Transverse colon (tissue), 4 donors: ENCODE measurements at regions of chr9 and their contacts with region 1.

Region 1: GRCh38 chr9:92790542-92791527 is 26.2 kb upstream of the BICD2 start:
- DNase-seq: peak; percentile 85
- H3K4me3 ChIP-seq: no peak overlapping the region
- H3K27ac ChIP-seq: no peak overlapping the region
- H3K4me1 ChIP-seq: no peaks in the 10 kb centered on the region
- H3K27me3 ChIP-seq: peaks cover 14% of the 10 kb centered on the region
- CTCF ChIP-seq: peak; percentile 80 to 91 (median 86)
- EP300 ChIP-seq: no peak
- POLR2A ChIP-seq: no peak

Region 2: GRCh38 chr9:92325269-92325990 is 465.4 kb before region 1 on chr9 and contains the starts of genes CENPP and NOL8:
- in situ Hi-C with region 1: loop called in 1 of 4 experiments (anchors 25 kb)
- intact Hi-C with region 1: no loop called
- DNase-seq: peak; percentile 86
- H3K4me3 ChIP-seq: peak within 1 kb of the TSS; percentile 58 to 91 (median 73)
- H3K27ac ChIP-seq: peak within 1 kb of the TSS; percentile 90 to 95 (median 92)
- H3K4me1 ChIP-seq: peaks cover 11 to 26% (median 16%) of the 10 kb centered on the region in 4 donors
- H3K27me3 ChIP-seq: no peaks in the 10 kb centered on the region
- CTCF ChIP-seq: peak in 1 of 5 experiments; percentile 6
- EP300 ChIP-seq: no peak
- POLR2A ChIP-seq: peak; percentile 35
- total RNA-seq, gene CENPP: 0.37 to 7.1 (median 3.2) TPM
- total RNA-seq, gene NOL8: 17.6 to 86.2 (median 24.3) TPM

Region 3: DNA sequence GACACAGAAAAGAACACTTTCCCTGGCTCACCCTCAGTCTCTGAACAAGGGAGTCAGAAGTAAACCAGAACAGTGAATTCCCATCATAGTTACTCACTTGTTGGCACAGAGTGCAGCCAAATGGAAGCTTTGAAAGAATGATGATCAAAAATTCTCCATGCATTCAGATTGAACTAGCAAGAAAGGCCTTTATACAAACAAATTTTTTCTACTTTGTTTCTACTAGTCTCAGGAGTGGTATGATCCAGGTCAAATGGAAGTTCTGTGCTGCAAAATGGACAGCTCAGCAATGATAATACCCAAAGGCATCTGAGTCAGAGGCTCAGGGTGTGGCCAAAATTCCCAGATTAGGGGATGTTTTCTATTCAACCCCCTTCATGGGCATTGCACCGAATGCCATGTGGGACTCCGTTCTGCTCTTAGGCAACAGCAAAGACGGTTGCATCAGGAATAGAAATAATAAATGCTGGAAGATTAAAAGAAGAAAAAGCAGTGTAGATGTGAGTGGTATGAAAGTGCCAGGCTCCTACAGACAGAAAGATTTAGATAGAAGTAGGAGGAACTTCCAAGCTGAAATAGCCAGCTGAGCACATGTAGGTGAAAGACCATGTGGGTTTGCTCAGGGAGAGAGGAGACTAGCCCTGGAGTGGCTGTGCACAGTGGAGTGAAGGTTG is 284.5 kb before region 1 on chr9:
- in situ Hi-C with region 1: no loop called
- intact Hi-C with region 1: no loop called
- DNase-seq: no peak
- H3K4me3 ChIP-seq: no peak overlapping the region
- H3K27ac ChIP-seq: peak overlapping the region; percentile 62 to 83 (median 70)
- H3K4me1 ChIP-seq: peaks cover 11 to 37% (median 19%) of the 10 kb centered on the region in 4 donors
- H3K27me3 ChIP-seq: no peaks in the 10 kb centered on the region
- CTCF ChIP-seq: no peak
- EP300 ChIP-seq: no peak
- POLR2A ChIP-seq: no peak

Region 4: GRCh38 chr9:92650839-92651621 is 139.8 kb before region 1 on chr9:
- in situ Hi-C with region 1: no loop called
- intact Hi-C with region 1: no loop called
- DNase-seq: peak; percentile 25
- H3K4me3 ChIP-seq: no peak overlapping the region
- H3K27ac ChIP-seq: peak overlapping the region; percentile 29 to 80 (median 58)
- H3K4me1 ChIP-seq: peaks cover 0 to 8% (median 2%) of the 10 kb centered on the region in 4 donors
- H3K27me3 ChIP-seq: no peaks in the 10 kb centered on the region
- CTCF ChIP-seq: no peak
- EP300 ChIP-seq: no peak
- POLR2A ChIP-seq: no peak

Region 5: DNA sequence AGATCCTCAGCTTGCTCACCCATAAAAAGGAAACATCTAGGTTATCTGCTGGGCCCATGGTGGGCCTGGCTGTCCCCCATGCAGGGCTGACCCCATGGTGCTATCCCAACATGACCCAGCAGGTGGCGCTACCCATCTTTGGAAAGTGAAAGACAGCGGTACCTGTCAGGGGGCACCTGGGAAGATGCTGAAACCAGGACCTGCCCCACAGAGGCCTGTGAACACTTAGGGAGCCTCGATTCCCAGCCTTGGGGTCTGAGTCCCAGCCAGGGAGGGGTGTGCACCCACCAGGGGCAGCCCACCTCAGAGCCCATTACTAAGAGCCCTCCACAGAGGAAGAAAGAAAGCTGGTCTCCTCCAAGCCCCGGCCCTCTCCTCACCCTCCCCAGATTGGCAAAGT is 74.3 kb before region 1 on chr9:
- in situ Hi-C with region 1: loop called in 2 of 4 experiments (anchors 5 kb)
- intact Hi-C with region 1: loop called (anchors 2 kb)
- DNase-seq: peak; percentile 80
- H3K4me3 ChIP-seq: no peak overlapping the region
- H3K27ac ChIP-seq: no peak overlapping the region
- H3K4me1 ChIP-seq: peaks cover 0 to 18% (median 6%) of the 10 kb centered on the region in 4 donors
- H3K27me3 ChIP-seq: no peaks in the 10 kb centered on the region
- CTCF ChIP-seq: peak; percentile 90 to 94 (median 91)
- EP300 ChIP-seq: no peak
- POLR2A ChIP-seq: no peak

Region 6: DNA sequence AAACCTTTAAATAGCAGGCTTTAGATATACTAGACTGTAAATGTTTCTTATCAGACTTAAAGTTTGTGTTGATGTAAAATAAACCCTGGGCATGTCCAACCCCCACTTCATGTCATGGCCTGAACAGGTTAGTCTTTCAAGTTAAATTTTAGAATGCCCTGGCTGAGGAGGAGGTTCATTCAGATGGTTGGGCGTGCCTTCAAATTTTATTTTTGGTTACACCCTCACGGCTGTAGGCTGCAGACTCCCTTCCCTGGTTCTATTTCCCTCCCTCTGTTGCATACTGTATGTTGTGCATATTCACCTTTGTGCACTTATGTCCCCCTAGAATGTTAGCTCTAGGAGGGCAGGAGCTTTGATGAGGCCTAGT is 20.9 kb before region 1 on chr9:
- in situ Hi-C with region 1: no loop called
- intact Hi-C with region 1: loop called (anchors 1 kb)
- DNase-seq: no peak
- H3K4me3 ChIP-seq: no peak overlapping the region
- H3K27ac ChIP-seq: no peak overlapping the region
- H3K4me1 ChIP-seq: peaks cover 8 to 37% (median 22%) of the 10 kb centered on the region in 4 donors
- H3K27me3 ChIP-seq: peaks cover 2% of the 10 kb centered on the region
- CTCF ChIP-seq: no peak
- EP300 ChIP-seq: no peak
- POLR2A ChIP-seq: no peak

Region 7: DNA sequence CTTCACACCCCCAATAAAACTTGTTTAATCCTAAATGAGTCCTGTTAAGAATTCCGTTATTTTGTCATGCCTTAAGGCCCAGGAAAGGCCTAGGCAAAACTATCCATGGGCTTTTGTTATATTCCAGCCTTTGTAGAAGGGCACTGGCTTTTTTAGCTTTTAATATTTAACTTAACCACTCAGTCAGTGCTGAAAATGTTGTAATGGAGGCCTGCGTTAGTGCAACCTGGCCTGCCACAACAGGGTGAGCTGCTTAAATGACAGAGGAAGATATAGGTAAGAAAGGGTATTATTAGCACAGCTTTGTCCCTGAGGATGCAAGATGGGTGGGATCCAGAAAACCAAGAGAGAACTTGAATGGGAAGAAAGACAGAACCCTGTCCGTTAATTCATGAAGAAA is 1723.9 kb after region 1 on chr9:
- in situ Hi-C with region 1: no loop called
- intact Hi-C with region 1: no loop called
- DNase-seq: no peak
- H3K4me3 ChIP-seq: no peak overlapping the region
- H3K27ac ChIP-seq: no peak overlapping the region
- H3K4me1 ChIP-seq: no peaks in the 10 kb centered on the region
- H3K27me3 ChIP-seq: no peaks in the 10 kb centered on the region
- CTCF ChIP-seq: no peak
- EP300 ChIP-seq: no peak
- POLR2A ChIP-seq: no peak